ENCODE measurements at regions of chr15 and their contacts with region 1.

Region 1: GRCh38 chr15:71448688-71449114 is 333.4 kb downstream of the THSD4 start:
- ATAC-seq: peak in 7 of 8 experiments; percentile 50 to 82 (median 68)
- H3K4me3 ChIP-seq: no peak overlapping the region
- H3K27ac ChIP-seq: no peak overlapping the region
- H3K4me1 ChIP-seq: no peaks in the 10 kb centered on the region

Region 2: DNA sequence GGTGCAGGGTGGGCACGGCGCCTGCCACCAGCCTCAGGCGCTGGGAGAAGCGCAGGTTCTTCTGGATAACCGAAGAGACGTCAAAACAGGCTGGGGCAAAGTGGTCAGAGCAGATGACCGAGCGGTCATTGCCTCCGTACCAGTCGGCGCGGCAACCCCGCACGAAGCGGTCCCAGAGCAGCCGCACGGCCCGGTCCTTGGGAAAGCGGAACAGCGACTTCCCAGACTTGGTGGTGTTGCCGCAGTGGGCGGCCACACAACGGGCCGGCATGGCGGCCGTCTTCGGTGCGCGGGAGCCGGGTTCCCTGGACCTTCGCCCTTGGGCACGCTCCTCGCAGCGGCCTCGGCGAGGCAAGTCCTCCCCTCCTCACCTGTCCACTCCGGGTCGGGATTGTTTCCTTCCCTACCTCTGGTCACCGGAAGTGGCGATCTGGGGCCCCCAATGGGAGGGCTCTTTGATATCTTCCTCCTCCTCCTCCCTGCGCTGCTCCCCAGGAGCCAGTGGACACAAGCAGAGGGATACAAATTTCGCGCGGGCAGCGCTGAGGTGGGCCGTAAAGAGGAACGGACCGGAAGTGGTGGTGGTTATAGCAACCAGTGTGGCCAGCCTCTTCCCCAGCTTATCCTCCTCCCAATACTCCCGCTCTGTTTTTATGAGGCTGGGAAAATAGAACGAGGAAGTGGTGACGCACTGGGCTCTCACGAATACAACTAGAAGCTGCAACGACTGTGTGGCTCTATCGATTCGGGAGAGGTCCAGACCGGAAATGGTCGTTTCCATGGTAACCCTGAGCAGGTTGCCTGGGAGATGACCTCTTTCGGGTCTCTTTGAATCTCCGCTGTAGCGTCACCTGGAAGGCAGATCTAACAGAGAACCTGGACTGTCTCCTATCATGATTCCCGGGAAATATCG is 556.4 kb before region 1 on chr15 and contains the starts of genes LRRC49 and THAP10:
- in situ Hi-C with region 1: loop called in 1 of 9 experiments (anchors 25 kb)
- ATAC-seq: peak; percentile 95 to 97 (median 96)
- H3K4me3 ChIP-seq: peak within 1 kb of the TSS; percentile 60 to 81 (median 79)
- H3K27ac ChIP-seq: peak within 1 kb of the TSS; percentile 92 to 98
- H3K4me1 ChIP-seq: peaks cover 12 to 13% of the 10 kb centered on the region in 2 donors
- total RNA-seq, gene LRRC49: 4.2 to 65.1 (median 54.6) TPM
- total RNA-seq, gene THAP10: 2.0 to 7.1 (median 5.3) TPM

Region 3: DNA sequence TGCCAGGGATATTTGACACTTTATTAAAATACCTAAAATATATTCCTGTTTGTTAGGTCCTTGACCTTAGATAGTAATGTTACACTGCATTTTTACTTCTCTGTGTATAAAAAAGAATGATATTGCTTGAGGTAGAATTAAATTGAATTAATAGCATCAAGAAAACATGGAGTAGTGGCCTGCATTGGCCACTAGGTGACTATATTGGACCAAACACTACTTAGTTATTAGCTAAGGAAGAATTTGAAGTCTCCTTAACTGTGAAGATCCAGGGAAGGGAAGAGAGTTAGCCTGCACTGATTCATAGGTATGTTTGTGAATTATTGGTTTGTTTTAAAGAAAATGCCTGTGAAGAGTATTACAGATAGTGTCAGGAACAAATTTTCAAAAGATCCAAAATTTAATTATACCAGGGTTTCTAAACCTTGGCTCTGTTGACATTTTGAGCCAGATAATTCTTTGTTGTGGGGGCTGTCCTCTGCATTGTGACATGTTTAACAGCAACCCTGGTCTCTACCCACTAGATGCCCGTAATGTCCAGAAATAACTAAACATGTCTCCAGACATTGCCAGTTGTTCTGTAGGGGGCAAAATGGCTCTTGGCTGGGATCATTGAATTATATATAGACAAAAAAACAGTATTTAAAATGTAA is 437.1 kb before region 1 on chr15:
- in situ Hi-C with region 1: loop called in 2 of 9 experiments (anchors 25 kb)
- ATAC-seq: peak in 4 of 8 experiments; percentile 55 to 75 (median 63)
- H3K4me3 ChIP-seq: no peak overlapping the region
- H3K27ac ChIP-seq: no peak overlapping the region
- H3K4me1 ChIP-seq: no peaks in the 10 kb centered on the region

Region 4: DNA sequence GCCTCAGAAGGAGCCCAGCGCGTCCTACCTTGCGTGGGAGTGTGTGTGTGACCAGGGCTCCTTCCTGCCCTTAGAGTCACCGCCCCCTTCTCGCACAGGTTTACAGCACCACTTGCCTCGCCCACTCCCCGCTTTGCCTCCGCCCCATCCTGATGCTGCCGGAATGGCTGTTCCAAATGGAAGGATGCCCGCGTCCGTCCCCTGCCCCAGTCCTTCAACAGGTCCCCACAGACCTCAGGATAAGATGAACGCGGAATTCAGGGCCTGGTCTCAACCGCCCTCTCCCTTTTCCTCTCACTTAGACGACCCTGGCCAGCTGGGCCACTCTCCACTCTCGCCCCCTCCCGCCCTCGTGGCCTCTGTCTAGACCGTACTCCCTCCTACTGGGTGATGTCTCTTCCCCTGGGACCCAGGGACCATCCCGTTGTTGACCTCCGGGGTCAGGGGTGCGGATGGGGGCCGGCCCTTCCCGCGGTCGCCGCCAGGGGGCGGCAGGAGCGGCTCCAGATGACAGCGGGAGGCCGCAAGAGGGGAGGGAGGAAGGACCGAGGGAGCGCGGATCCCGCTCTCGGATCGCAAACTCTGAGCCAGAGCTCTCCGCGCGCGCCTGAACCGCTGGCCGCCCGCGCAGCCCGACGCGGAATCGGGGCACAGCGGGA is 333.7 kb before region 1 on chr15 and contains the start of gene THSD4:
- in situ Hi-C with region 1: loop called in 2 of 9 experiments (anchors 10 to 25 kb)
- ATAC-seq: peak; percentile 79 to 86 (median 82)
- H3K4me3 ChIP-seq: peak within 1 kb of the TSS; percentile 51 to 86 (median 57)
- H3K27ac ChIP-seq: no peak within 1 kb of the TSS
- H3K4me1 ChIP-seq: peaks cover 10 to 29% of the 10 kb centered on the region in 2 donors
- total RNA-seq, gene THSD4: 1.3 to 28.4 (median 6.7) TPM